ENCODE measurements at regions of chr10 and their contacts with region 1.

Region 1: DNA sequence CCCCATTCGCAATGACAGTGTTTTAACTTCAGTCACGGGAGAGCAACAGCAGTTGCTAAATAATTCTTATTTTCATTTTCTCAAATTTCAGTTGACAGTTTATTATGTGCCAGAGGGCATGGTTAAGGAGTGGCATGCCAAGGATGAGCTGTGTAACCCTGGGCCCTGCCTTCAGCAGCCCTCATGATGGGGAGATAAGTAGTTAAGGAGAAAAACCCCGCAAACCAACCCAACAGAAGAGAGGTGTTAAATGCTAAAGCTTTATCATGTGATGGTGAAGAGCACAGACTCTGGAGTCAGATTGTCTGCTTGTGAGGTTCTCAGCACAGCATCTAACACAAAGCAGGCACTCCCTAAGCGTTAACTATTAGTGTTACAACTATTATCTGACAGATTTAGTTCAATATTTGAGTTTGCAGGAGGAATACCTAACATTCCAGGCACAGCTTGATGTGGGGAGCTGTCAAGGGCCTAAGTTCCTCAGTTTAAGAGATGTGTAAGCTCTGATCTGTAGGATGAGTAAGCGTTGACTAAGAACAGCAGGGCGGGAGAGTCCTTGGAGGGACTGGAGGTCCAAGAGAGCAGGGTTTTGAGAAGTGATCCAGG is 29.6 kb downstream of the STAM start:
- DNase-seq: peak in 1 of 5 donors; percentile 40
- H3K4me3 ChIP-seq: no peak overlapping the region
- H3K4me3 Mint-ChIP-seq: peak overlapping the region in 4 of 8 donors; percentile 3 to 54 (median 31)
- H3K27ac ChIP-seq: peak overlapping the region; percentile 22
- H3K27ac Mint-ChIP-seq: peak overlapping the region; percentile 11 to 81 (median 44)
- H3K4me1 ChIP-seq: peaks cover 54% of the 10 kb centered on the region
- H3K4me1 Mint-ChIP-seq: peaks cover 41 to 76% (median 53%) of the 10 kb centered on the region in 4 donors
- H3K27me3 ChIP-seq: no peaks in the 10 kb centered on the region
- H3K27me3 Mint-ChIP-seq: no peaks in the 10 kb centered on the region

Region 2: GRCh38 chr10:17497446-17498030 is 176.0 kb before region 1 on chr10:
- CTCF ChIA-PET with region 1: no interaction called
- POLR2A ChIA-PET with region 1: no interaction called
- intact Hi-C with region 1: no loop called
- DNase-seq: no peak
- H3K4me3 ChIP-seq: no peak overlapping the region
- H3K4me3 Mint-ChIP-seq: no peak overlapping the region
- H3K27ac ChIP-seq: no peak overlapping the region
- H3K27ac Mint-ChIP-seq: no peak overlapping the region
- H3K4me1 ChIP-seq: peaks cover 5% of the 10 kb centered on the region
- H3K4me1 Mint-ChIP-seq: no peaks in the 10 kb centered on the region
- H3K27me3 ChIP-seq: no peaks in the 10 kb centered on the region
- H3K27me3 Mint-ChIP-seq: no peaks in the 10 kb centered on the region

Region 3: GRCh38 chr10:17655567-17656146 is 17.9 kb before region 1 on chr10:
- CTCF ChIA-PET with region 1: no interaction called
- POLR2A ChIA-PET with region 1: interaction called, 6 read pairs
- intact Hi-C with region 1: loop called (anchors 2 kb)
- DNase-seq: peak in 3 of 5 donors; percentile 23 to 41 (median 37)
- H3K4me3 ChIP-seq: no peak overlapping the region
- H3K4me3 Mint-ChIP-seq: peak overlapping the region; percentile 17 to 65 (median 47)
- H3K27ac ChIP-seq: peak overlapping the region; percentile 32
- H3K27ac Mint-ChIP-seq: peak overlapping the region in 6 of 7 donors; percentile 22 to 80 (median 68)
- H3K4me1 ChIP-seq: peaks cover 66% of the 10 kb centered on the region
- H3K4me1 Mint-ChIP-seq: peaks cover 47 to 75% (median 57%) of the 10 kb centered on the region in 4 donors
- H3K27me3 ChIP-seq: no peaks in the 10 kb centered on the region
- H3K27me3 Mint-ChIP-seq: no peaks in the 10 kb centered on the region

Region 4: GRCh38 chr10:17756557-17757217 is 83.1 kb after region 1 on chr10:
- CTCF ChIA-PET with region 1: no interaction called
- POLR2A ChIA-PET with region 1: no interaction called
- intact Hi-C with region 1: no loop called
- DNase-seq: no peak
- H3K4me3 ChIP-seq: no peak overlapping the region
- H3K4me3 Mint-ChIP-seq: peak overlapping the region in 2 of 8 donors; percentile 6 to 44
- H3K27ac ChIP-seq: no peak overlapping the region
- H3K27ac Mint-ChIP-seq: peak overlapping the region in 1 of 7 donors; percentile 23
- H3K4me1 ChIP-seq: no peaks in the 10 kb centered on the region
- H3K4me1 Mint-ChIP-seq: peaks cover 2 to 5% (median 3%) of the 10 kb centered on the region in 4 donors
- H3K27me3 ChIP-seq: no peaks in the 10 kb centered on the region
- H3K27me3 Mint-ChIP-seq: no peaks in the 10 kb centered on the region